Right ventricle myocardium superior (tissue), 1 donor: ENCODE measurements at regions of chr9 and their contacts with region 1.

Region 1: DNA sequence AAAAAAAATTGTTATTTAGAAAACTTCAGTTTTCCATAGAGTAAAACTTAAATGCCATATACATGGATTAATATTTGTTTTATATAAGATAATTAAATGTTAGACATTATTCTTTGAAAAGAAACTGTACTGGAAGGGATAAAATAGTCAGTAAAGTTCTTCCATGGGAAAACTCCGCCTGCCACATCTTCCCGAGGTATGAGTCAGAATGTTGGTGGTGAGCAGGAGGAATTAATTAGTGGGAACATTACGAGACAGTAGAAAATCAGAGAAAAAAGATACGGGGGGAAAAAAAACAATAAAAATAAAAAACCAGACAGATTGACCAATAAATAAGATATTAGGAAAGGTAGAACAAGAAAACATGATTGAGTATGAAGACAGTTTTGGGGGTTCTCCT is 930.3 kb upstream of the C9orf72 start:
- DNase-seq: no peak
- ATAC-seq: no peak

Region 2: GRCh38 chr9:28487561-28487960 is 16.0 kb before region 1 on chr9:
- intact Hi-C with region 1: loop called (anchors 2 kb)
- DNase-seq: no peak
- ATAC-seq: no peak

Region 3: GRCh38 chr9:28583832-28584231 is 80.3 kb after region 1 on chr9:
- intact Hi-C with region 1: no loop called
- DNase-seq: no peak
- ATAC-seq: no peak